ENCODE measurements at regions of chr5 and their contacts with region 1.

Region 1: DNA sequence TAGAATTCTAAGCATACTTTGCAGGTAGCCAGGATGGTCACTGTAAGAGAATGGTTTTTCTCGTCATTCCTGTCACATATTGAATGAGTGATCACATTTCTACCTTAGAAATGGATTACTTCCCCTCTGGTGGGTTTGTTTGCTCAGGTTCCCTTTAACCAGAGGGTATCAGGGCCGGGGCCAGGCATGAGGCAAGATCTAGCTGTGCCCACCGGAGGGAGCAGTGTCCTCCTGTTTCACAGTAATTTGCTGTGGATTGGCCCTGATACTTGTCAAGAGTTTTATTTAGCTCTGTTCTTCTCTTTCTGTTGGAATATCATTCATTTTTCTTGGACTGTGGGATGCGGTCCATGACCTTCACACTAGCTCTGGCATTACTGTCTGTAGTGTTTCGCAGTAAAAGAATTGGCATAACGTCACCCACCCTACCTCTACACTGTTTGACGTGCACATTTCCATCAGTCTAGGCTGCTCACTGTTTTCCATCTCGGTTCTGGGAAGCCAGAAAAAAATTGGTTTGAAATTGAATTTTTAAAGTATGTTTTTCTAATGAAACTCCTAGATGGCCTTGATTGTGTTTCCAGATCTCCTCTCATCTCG is 42.4 kb upstream of the ZBED3 start:
- DNase-seq: peak in 6 of 10 donors; percentile 33 to 55 (median 44)
- H3K4me3 ChIP-seq: no peak overlapping the region
- H3K27ac ChIP-seq: peak overlapping the region in 16 of 59 donors; percentile 2 to 58 (median 22)
- H3K27me3 ChIP-seq: no peaks in the 10 kb centered on the region
- CTCF ChIP-seq: peak in 53 of 56 donors; percentile 9 to 69 (median 38)

Region 2: GRCh38 chr5:77086689-77087483 is 42.6 kb before region 1 on chr5 and contains the start of gene ZBED3:
- intact Hi-C with region 1: loop called (anchors 2 to 5 kb)
- DNase-seq: peak; percentile 62 to 78 (median 72)
- H3K4me3 ChIP-seq: peak within 1 kb of the TSS; percentile 65 to 95 (median 86)
- H3K27ac ChIP-seq: peak within 1 kb of the TSS; percentile 83 to 99 (median 97)
- H3K27me3 ChIP-seq: no peaks in the 10 kb centered on the region
- CTCF ChIP-seq: peak in 40 of 56 donors; percentile 7 to 49 (median 32)
- total RNA-seq, gene ZBED3: 3.1 to 27.3 (median 10.4) TPM

Region 3: DNA sequence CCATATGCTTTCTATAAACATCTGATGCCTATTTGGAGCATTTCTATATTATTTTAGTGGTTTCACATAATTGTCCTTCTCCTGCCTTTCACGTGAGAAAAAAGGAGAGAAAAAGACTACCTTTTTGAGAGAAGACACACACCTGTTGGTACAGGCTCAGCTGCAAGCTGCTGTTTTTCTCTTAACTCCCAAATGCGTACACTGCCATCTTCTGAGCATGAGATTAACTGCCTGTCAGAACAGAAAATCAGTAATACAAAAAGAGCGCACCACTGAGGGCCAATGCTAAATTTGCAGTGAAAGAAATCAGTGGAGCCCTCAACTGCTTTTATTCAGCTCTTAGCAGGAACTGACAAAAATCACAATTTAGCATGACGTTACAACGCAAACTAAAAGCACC is 307.7 kb after region 1 on chr5:
- intact Hi-C with region 1: loop called in 1 of 2 experiments (anchors 5 kb)
- DNase-seq: peak in 1 of 10 donors; percentile 15
- H3K4me3 ChIP-seq: no peak overlapping the region
- H3K27ac ChIP-seq: peak overlapping the region in 39 of 59 donors; percentile 3 to 72 (median 32)
- H3K27me3 ChIP-seq: no peaks in the 10 kb centered on the region
- CTCF ChIP-seq: peak in 55 of 56 donors; percentile 10 to 72 (median 53)

Region 4: GRCh38 chr5:77491783-77492652 is 362.5 kb after region 1 on chr5 and contains the start of gene WDR41:
- intact Hi-C with region 1: loop called (anchors 10 kb)
- DNase-seq: peak; percentile 80 to 89 (median 84)
- H3K4me3 ChIP-seq: peak within 1 kb of the TSS; percentile 67 to 95 (median 87)
- H3K27ac ChIP-seq: peak within 1 kb of the TSS; percentile 75 to 98 (median 94)
- H3K27me3 ChIP-seq: no peaks in the 10 kb centered on the region
- CTCF ChIP-seq: peak; percentile 86 to 100 (median 96)
- total RNA-seq, gene WDR41: 43.7 to 80.4 (median 60.8) TPM